ENCODE measurements at regions of chr5 and their contacts with region 1.

Region 1: DNA sequence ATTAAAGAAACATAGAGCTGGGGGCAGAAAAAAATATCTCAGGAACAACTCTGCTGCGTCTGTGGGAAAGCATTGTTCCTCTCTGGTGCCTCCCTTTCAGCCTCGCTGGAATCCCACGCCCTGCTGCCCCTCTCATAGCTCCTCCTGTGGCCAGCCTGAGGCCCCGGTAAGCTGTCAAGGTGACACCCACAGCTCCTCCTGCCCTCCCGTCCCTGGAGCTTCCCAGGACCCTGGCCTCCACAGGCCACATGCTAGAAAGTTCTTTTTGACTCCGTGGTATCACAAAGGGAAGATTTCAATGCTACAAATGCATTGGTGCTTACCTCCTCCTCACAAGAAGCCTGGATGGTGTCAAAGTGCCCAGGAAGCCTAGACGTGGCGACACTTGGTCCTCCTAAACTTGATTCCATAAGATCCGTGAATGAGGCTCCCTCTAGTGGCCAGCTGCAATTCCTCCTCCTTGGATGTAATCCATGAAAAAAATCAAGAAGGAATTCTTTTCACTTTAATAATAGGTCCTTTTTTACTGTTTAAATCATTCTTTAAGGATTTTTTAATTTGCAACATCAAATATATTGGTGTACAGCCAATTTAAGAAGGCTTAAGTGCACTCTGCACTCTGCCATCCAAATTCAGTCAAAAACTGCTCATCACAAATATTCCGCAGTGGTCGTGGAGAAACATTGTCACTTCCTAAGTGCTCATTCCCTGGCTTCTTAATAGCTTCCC is 104.9 kb downstream of the CFAP90 start:
- DNase-seq: peak; percentile 56 to 83 (median 61)
- ATAC-seq: peak in 1 of 2 donors; percentile 54
- H3K4me3 ChIP-seq: no peak overlapping the region
- H3K27ac ChIP-seq: no peak overlapping the region
- H3K4me1 ChIP-seq: no peaks in the 10 kb centered on the region
- H3K27me3 ChIP-seq: no peaks in the 10 kb centered on the region

Region 2: DNA sequence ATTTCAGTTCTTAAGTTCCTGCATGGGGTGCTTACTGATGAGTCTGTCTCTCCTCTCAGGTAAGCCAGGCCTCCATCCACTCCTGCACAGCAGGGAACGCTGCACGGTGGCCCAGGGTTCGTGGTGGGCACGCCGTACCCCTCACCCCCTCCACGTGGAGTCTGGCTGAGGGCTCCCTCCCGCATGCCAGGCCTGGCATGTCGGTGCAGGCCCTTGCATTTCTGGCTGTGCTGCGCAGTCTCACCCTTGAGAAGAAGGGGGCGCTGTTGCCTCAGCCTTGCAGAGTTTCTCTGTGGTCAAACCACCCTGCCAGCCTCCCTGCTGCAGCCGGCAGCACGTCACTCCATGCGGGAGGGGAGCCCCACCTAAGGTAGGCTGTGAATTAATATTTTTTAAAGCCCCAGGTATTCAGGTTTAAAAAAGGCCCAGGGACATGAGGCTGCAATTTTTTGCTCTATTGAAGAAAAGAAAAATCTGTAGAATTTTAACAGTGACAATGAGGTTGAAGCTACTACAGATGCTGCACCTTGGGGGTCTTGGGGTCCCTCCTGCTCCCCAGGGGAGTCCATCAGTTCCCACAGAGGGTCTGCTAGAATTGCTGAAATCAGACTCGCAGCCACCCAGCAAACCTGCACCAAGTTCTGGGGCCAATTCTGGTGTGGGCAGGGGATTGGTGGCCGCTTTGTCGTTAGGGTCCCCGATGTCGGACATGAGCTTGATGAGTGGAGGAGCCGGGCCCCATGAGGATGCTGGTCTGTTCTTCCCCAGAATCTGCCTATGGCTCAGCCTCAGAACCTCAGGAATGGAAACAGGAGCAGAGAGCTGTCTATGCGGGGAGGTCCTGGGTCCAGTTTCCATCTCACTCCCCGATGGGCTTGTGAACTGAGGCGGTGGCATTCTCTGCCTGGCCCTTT is 980.2 kb before region 1 on chr5:
- intact Hi-C with region 1: loop called in 1 of 4 experiments (anchors 10 kb)
- DNase-seq: peak; percentile 77 to 90 (median 90)
- ATAC-seq: peak; percentile 70 to 79
- H3K4me3 ChIP-seq: no peak overlapping the region
- H3K27ac ChIP-seq: no peak overlapping the region
- H3K4me1 ChIP-seq: peaks cover 3% of the 10 kb centered on the region
- H3K27me3 ChIP-seq: no peaks in the 10 kb centered on the region

Measured in right cardiac atrium (tissue), 5 donors.